Dorsolateral prefrontal cortex (tissue), 120 donors: ENCODE measurements at regions of chr9 and their contacts with region 1.

Region 1: DNA sequence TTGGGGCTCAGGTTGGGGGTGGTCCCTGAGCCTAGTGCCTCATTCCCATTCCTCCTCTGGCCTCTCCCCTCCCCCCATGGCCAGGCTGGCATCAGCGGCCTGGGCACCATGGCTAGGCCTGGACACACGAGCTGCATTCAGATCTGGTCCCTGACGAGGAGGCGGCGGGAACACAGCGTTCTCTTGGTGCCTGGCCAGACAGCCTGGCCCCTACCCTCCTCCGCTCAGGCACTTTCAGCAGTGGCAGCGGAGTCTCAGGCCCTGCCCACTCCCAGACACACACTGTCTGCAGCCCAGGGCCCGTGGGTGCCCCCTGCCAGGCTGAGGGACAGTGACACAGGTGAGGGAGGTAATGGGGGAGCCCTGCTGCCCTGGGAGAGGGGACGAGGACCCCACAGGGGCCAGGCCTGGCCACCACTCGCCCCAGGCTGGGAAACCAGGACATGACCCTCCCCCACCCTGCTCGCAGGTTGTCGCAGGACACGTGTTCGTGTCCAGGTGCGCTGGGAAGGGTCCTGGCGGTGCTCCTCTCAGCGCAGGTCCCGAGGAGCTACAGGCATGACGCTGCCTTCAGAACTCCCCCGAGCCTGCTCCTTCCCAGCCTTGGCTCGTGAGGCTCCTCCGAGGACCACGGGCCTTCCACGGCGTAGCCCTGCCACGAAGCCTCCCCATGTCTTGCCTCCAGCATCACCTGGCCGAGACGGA is 19.9 kb upstream of the UBAC1 start:
- DNase-seq: peak in 9 of 10 donors; percentile 84 to 92 (median 90)
- H3K4me3 ChIP-seq: peak overlapping the region in 2 of 59 donors; percentile 4 to 27
- H3K27ac ChIP-seq: peak overlapping the region in 57 of 59 donors; percentile 43 to 93 (median 80)
- H3K27me3 ChIP-seq: peaks cover 0 to 9% (median 0%) of the 10 kb centered on the region in 45 donors
- CTCF ChIP-seq: peak in 6 of 56 donors; percentile 8 to 45 (median 15)

Region 2: DNA sequence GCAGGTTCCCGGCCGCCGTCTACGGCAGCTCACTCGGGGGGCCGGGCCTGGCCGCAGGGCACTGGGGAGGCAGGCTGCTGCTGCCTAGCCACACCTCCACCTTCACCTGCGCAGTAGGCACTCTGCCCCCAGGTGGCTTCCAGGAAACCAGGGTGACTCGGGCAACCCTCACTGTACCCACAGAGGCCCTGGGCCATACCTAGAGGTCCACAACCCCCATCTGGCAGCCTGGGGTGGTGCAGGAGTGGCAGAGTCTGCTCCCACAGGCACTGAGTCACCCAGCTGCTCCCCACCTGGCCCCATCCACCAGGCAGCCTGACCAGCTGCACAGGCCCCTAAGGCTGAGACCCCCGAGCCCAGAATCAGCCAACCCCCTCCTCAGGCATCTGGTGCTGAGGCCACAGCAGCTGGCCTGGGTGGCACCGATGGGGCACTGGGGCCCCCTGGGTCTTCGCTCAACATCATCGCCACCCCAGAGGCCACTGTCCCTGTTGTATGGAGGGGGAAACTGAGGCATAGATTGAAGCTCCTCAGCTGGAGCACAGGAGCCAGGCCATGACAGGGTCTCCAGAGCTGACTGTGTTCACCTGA is 208.9 kb before region 1 on chr9:
- intact Hi-C with region 1: no loop called
- DNase-seq: no peak
- H3K4me3 ChIP-seq: no peak overlapping the region
- H3K27ac ChIP-seq: no peak overlapping the region
- H3K27me3 ChIP-seq: no peaks in the 10 kb centered on the region
- CTCF ChIP-seq: no peak

Region 3: GRCh38 chr9:136089697-136090045 is 108.6 kb after region 1 on chr9:
- intact Hi-C with region 1: loop called in 1 of 2 experiments (anchors 5 kb)
- DNase-seq: no peak
- H3K4me3 ChIP-seq: peak overlapping the region in 2 of 59 donors; percentile 15 to 30
- H3K27ac ChIP-seq: peak overlapping the region in 42 of 59 donors; percentile 6 to 94 (median 65)
- H3K27me3 ChIP-seq: no peaks in the 10 kb centered on the region
- CTCF ChIP-seq: peak in 53 of 56 donors; percentile 23 to 73 (median 50)

Region 4: DNA sequence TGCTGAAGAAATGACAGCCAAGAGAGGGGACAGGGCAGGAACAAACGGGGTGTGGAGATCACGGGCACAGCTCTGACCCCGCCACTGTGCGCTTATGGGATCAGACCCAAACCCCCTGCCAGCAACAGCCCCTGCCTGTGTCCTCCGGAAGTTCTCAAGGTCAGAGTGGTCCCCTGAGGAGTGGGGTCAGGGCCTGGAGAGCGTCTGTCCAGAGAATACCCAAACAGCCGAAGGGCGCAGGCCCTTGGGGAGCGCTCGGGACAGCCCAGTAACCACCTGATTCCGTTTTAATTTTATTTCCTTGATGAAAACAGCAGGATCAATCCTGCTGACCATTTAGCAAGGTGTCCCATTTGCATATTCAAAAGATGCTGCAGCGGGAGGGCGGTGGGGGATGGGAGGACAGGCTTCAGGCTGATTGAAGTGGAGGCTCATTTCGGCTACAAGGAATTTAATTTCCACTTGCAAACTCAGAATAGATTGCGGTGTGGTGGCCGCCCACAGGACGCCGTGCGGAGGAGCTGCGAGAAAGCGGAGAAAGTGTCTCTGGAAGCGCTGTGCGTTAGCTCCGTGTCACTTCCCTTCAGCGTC is 170.2 kb after region 1 on chr9:
- intact Hi-C with region 1: no loop called
- DNase-seq: no peak
- H3K4me3 ChIP-seq: no peak overlapping the region
- H3K27ac ChIP-seq: no peak overlapping the region
- H3K27me3 ChIP-seq: peaks cover 0 to 28% (median 12%) of the 10 kb centered on the region in 45 donors
- CTCF ChIP-seq: no peak